Colonic mucosa (tissue), 4 donors: ENCODE measurements at regions of chr7 and their contacts with region 1.

Region 1: DNA sequence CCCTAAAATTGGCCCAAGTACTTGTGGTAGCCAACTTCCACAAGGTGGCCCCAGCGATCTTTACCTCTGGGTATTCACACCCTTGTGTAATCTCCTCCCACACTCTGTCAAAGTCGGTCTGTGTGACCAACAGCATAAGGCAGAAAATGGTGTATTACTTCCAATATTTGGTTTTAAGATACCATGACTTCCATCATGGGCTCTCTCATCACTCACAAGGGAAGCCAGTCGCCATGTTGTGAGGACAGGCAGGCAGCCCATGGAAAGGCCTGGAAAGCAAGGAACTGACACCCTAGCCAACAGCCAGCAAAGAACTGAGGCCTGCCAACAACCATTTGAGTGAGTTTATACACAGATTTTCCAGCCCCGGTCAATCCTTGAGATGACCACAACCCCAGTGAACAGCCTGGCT is 91.0 kb upstream of the KMT2E start:
- DNase-seq: peak; percentile 89
- H3K4me3 ChIP-seq: no peak overlapping the region
- H3K27ac ChIP-seq: peak overlapping the region; percentile 73
- H3K4me1 ChIP-seq: peaks cover 11% of the 10 kb centered on the region
- H3K27me3 ChIP-seq: no peaks in the 10 kb centered on the region
- CTCF ChIP-seq: peak; percentile 68

Region 2: GRCh38 chr7:104231054-104232046 is 691.7 kb before region 1 on chr7:
- intact Hi-C with region 1: loop called (anchors 5 kb)
- DNase-seq: peak; percentile 30
- H3K4me3 ChIP-seq: no peak overlapping the region
- H3K27ac ChIP-seq: no peak overlapping the region
- H3K4me1 ChIP-seq: no peaks in the 10 kb centered on the region
- H3K27me3 ChIP-seq: no peaks in the 10 kb centered on the region
- CTCF ChIP-seq: peak; percentile 73

Region 3: GRCh38 chr7:104883718-104884452 is 39.1 kb before region 1 on chr7:
- intact Hi-C with region 1: loop called (anchors 5 kb)
- DNase-seq: peak; percentile 97
- H3K4me3 ChIP-seq: peak overlapping the region; percentile 6
- H3K27ac ChIP-seq: peak overlapping the region; percentile 68
- H3K4me1 ChIP-seq: no peaks in the 10 kb centered on the region
- H3K27me3 ChIP-seq: no peaks in the 10 kb centered on the region
- CTCF ChIP-seq: peak; percentile 86